Mammary epithelial cell (primary cell): ENCODE measurements at regions of chr11 and their contacts with region 1.

Region 1: DNA sequence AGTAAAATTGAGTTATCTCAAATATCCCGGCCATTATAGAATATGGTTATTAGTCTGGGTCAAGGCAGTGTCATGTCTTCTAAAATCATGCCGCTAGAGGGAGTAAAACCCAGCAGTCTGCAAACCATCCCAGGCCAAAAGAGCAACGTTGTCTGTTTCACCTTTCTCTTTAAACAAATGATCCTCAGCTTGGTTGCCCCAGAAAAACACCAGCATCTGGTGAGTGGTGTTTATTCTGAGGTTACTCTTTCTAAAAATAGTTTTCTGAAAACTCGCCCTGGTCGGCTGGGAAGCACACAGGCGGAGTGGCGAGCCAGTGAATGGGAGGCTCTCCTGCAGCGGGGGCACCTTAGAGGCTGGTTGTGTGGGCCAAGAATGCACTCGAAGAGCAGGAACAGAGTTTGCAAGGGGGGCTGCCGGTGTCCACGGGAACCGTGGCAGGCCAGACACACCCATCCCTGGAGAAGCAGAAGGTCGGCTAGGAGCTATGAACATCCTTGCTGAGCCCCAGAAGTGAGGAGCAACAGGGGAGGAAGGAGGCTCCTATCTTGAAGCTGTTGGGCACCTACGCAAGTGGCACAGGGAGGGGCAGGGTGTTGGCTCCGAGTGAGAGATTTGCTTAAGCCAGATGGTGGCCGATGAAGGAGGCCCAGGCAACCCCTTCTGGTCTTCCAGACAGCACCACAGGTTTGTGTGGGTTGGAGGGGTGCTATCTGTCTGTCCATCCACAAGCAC is 297.1 kb downstream of the ETS1 start:
- DNase-seq: peak; percentile 45
- H3K4me3 ChIP-seq: no peak overlapping the region
- H3K27ac ChIP-seq: no peak overlapping the region
- H3K4me1 ChIP-seq: peaks cover 4% of the 10 kb centered on the region
- H3K27me3 ChIP-seq: no peaks in the 10 kb centered on the region
- CTCF ChIP-seq: peak; percentile 79 to 86

Region 2: DNA sequence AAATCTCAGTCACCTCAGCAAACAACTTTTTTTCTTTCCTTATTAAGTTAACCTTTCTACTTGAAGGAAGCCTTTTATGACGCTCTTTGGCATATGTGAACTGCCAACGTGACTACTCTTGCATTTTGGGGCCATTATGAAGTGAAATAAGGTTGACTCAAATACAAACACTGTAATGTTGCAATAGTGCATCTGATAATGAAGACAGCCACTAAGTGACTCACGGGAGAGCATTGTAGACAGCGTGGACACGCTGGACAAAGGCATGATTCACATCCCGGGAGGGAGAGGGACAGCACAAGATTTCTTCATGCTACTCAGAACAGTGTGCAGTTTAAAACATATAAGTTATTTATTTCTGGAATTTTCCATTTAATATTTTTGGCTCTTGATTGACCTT is 263.7 kb before region 1 on chr11:
- CTCF ChIA-PET with region 1: no interaction called
- dilution Hi-C with region 1: no loop called
- in situ Hi-C with region 1: loop called (anchors 25 kb)
- intact Hi-C with region 1: loop called (anchors 1 kb)
- DNase-seq: peak; percentile 99
- H3K4me3 ChIP-seq: no peak overlapping the region
- H3K27ac ChIP-seq: peak overlapping the region; percentile 87
- H3K4me1 ChIP-seq: peaks cover 31% of the 10 kb centered on the region
- H3K27me3 ChIP-seq: no peaks in the 10 kb centered on the region
- CTCF ChIP-seq: no peak

Region 3: GRCh38 chr11:128172046-128172878 is 118.0 kb before region 1 on chr11:
- CTCF ChIA-PET with region 1: no interaction called
- dilution Hi-C with region 1: loop called (anchors 10 kb)
- in situ Hi-C with region 1: loop called (anchors 10 kb)
- intact Hi-C with region 1: loop called (anchors 1 kb)
- DNase-seq: peak; percentile 69
- H3K4me3 ChIP-seq: no peak overlapping the region
- H3K27ac ChIP-seq: peak overlapping the region; percentile 72
- H3K4me1 ChIP-seq: peaks cover 8% of the 10 kb centered on the region
- H3K27me3 ChIP-seq: no peaks in the 10 kb centered on the region
- CTCF ChIP-seq: peak; percentile 81 to 84

Region 4: DNA sequence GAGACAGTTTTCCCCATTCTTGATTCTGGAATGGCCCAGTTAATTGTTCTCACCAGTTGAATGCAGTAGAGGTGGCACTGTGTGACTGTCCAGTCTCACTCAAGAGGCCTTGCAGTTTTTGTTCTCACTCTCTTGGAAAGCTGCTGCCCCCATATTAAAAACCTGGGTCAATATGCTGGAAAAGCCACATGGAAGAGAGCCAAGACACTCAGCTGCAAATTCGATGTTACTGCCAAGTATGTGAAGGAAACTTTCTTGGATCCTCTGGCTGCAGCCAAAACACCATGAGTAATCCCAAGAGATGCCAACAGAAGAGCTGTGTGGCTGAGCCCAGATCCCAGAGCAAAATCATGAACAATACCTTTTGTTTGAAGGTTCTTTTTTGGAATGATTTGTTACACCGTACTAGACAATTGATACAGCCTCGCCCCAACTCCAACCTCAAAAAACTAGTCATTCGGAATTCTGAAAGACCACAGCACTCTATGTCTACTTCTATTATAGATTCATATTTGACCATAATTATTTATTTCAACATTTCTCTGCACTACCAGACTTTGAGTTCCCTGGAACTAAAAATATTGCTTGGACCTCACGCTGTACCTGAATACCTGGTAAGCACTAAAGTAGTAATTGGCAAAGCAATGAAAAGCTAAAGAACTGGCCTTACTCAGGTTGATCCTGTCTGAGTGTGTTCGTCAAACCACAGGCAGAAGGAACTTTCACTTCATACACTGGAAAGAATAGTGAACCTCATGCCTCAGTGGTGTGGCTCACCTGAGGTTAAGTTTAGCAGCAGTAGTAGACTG is 81.7 kb before region 1 on chr11:
- CTCF ChIA-PET with region 1: no interaction called
- dilution Hi-C with region 1: no loop called
- in situ Hi-C with region 1: no loop called
- intact Hi-C with region 1: loop called (anchors 1 kb)
- DNase-seq: peak; percentile 94
- H3K4me3 ChIP-seq: peak overlapping the region in 1 of 3 experiments; percentile 1
- H3K27ac ChIP-seq: peak overlapping the region; percentile 94
- H3K4me1 ChIP-seq: peaks cover 57% of the 10 kb centered on the region
- H3K27me3 ChIP-seq: no peaks in the 10 kb centered on the region
- CTCF ChIP-seq: no peak

Region 5: GRCh38 chr11:128467610-128468041 is 177.4 kb after region 1 on chr11:
- CTCF ChIA-PET with region 1: no interaction called
- dilution Hi-C with region 1: no loop called
- in situ Hi-C with region 1: no loop called
- intact Hi-C with region 1: loop called (anchors 2 kb)
- DNase-seq: peak; percentile 93
- H3K4me3 ChIP-seq: no peak overlapping the region
- H3K27ac ChIP-seq: peak overlapping the region; percentile 59
- H3K4me1 ChIP-seq: peaks cover 26% of the 10 kb centered on the region
- H3K27me3 ChIP-seq: no peaks in the 10 kb centered on the region
- CTCF ChIP-seq: peak in 1 of 2 donors; percentile 30